ENCODE measurements at regions of chr3 and their contacts with region 1.

Region 1: GRCh38 chr3:145776782-145777408 is 384.1 kb downstream of the PLOD2 start:
- DNase-seq: peak in 1 of 2 experiments; percentile 25
- H3K4me3 ChIP-seq: no peak overlapping the region
- H3K27ac ChIP-seq: no peak overlapping the region
- H3K4me1 ChIP-seq: no peaks in the 10 kb centered on the region
- H3K27me3 ChIP-seq: no peaks in the 10 kb centered on the region
- CTCF ChIP-seq: peak; percentile 71

Region 2: GRCh38 chr3:146026547-146026946 is 249.7 kb after region 1 on chr3:
- CTCF ChIA-PET with region 1: no interaction called
- POLR2A ChIA-PET with region 1: no interaction called
- intact Hi-C with region 1: loop called (anchors 1 kb)
- DNase-seq: no peak
- H3K4me3 ChIP-seq: no peak overlapping the region
- H3K27ac ChIP-seq: no peak overlapping the region
- H3K4me1 ChIP-seq: no peaks in the 10 kb centered on the region
- H3K27me3 ChIP-seq: no peaks in the 10 kb centered on the region
- CTCF ChIP-seq: no peak

Region 3: GRCh38 chr3:146065573-146066006 is 288.7 kb after region 1 on chr3:
- CTCF ChIA-PET with region 1: interaction called, 3 read pairs
- POLR2A ChIA-PET with region 1: interaction called, 6 read pairs
- intact Hi-C with region 1: loop called (anchors 5 kb)
- DNase-seq: peak; percentile 15 to 37
- H3K4me3 ChIP-seq: no peak overlapping the region
- H3K27ac ChIP-seq: no peak overlapping the region
- H3K4me1 ChIP-seq: 0 out of 2 replicates have a peak, but pooled peaks cover 9% of the 10 kb centered on the region
- H3K27me3 ChIP-seq: no peaks in the 10 kb centered on the region
- CTCF ChIP-seq: peak; percentile 91

Region 4: DNA sequence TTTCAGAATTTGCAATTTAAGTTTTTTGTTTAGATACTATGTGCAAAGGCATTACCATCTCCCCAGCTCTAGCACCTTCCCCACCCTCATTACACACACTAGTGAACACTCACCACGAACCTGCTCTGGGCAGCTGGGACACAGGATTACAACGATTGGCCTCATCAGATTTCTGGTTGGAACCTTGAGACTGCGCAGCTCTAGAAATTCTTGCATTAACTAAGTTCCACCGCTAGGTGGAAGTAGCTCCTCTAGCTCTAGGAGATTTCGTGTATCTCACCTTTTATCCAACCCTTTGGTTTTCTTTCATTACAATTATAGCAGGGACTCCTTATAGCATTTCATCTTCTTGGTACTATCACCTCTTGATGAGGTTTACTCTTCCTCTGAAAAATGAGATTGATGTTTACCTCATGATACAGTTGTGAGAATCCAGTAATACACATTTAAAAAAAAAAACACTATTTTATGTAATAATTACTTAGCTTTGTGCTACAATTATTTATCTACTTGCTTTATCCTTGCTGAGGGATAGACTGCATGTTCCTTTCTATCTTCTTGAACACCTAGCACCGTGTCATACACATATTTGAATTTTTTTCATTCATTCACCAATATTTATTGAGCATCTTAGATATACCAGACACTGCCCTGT is 412.8 kb after region 1 on chr3:
- CTCF ChIA-PET with region 1: interaction called, 5 read pairs
- POLR2A ChIA-PET with region 1: no interaction called
- intact Hi-C with region 1: loop called (anchors 1 kb)
- DNase-seq: peak; percentile 16 to 45
- H3K4me3 ChIP-seq: no peak overlapping the region
- H3K27ac ChIP-seq: no peak overlapping the region
- H3K4me1 ChIP-seq: no peaks in the 10 kb centered on the region
- H3K27me3 ChIP-seq: no peaks in the 10 kb centered on the region
- CTCF ChIP-seq: peak; percentile 82

Region 5: GRCh38 chr3:146326670-146327543 is 550.0 kb after region 1 on chr3:
- CTCF ChIA-PET with region 1: no interaction called
- POLR2A ChIA-PET with region 1: no interaction called
- intact Hi-C with region 1: loop called (anchors 10 kb)
- DNase-seq: no peak
- H3K4me3 ChIP-seq: no peak overlapping the region
- H3K27ac ChIP-seq: no peak overlapping the region
- H3K4me1 ChIP-seq: no peaks in the 10 kb centered on the region
- H3K27me3 ChIP-seq: no peaks in the 10 kb centered on the region
- CTCF ChIP-seq: 0 out of 2 replicates have a peak, but pooled peaks have one; percentile 43